ENCODE measurements at regions of chr7 and their contacts with region 1.

Region 1: DNA sequence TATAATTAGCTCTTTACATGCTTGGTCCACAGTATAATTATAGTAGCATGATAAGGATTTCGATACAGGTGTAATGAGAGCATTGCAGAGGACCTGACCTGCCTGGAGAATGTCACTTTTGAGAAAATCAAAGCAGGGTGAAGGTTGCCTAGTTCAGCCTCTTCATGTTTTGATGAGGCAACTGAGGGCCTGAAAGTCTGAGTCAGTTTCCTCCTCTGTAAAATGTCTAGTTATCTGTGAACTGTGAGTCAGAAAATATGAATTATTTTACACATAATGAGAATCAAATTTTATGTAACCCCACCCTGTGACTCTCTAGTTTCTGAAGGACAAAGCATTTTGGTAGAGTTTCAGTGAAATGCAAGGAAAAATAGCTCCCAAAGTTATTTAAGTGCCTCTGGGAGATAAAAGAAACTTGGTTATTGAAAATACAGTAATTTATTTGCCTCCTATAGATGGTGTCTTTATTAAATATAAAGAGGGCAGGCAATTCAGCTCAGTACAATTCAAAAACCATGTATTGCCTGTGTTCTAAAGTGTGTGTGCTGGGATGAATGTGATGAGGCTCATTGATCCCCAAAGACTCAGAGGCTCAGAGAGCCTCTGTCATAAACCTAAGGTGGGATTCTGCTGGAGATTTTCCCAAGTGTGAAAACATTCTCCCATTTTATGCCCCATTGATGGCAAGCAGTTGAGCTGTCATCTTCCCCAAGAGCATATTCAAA is 37.3 kb upstream of the SAMD9L start:
- DNase-seq: peak; percentile 42
- H3K4me3 Mint-ChIP-seq: no peak overlapping the region
- H3K27ac Mint-ChIP-seq: no peak overlapping the region
- H3K4me1 Mint-ChIP-seq: peaks cover 12% of the 10 kb centered on the region
- H3K27me3 Mint-ChIP-seq: peaks cover 43% of the 10 kb centered on the region

Region 2: GRCh38 chr7:93147363-93147762 is 38.1 kb before region 1 on chr7:
- CTCF ChIA-PET with region 1: no interaction called
- intact Hi-C with region 1: loop called (anchors 2 kb)
- DNase-seq: peak; percentile 54
- H3K4me3 Mint-ChIP-seq: peak overlapping the region; percentile 81
- H3K27ac Mint-ChIP-seq: peak overlapping the region; percentile 43
- H3K4me1 Mint-ChIP-seq: peaks cover 22% of the 10 kb centered on the region
- H3K27me3 Mint-ChIP-seq: no peaks in the 10 kb centered on the region